ENCODE measurements at regions of chr2 and their contacts with region 1.

Region 1: DNA sequence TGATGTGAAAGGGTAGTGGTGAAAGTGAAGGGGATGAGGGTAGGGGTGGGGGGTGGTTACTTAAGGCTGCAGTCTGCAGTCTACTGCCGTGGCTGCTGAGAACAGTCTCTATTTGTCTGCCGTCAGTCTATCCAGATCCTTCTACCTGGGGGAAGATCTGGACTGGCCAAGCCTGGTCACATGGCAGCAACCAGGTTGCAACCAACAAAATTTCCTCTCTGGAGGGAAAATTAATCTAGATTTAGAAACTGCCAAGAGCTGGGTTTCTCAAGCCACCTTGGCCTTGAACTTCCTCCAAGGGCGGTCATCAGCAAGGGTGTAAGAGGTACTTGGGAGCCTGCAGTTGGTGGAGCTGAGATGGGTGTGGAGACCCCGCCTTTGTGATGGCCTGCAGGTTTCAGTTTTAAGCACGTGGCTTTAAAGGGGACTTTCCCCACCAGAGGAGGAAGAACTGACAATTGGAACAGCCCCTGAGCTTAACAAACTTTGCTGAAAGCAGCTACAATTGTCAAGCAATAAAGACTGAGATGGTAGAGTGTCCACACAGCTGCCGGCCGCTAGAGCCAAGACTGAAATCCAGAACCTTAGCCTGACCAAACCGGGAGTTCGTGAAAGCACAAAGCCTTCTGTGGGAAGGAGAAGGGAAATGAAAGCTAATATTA is 31.4 kb upstream of the KCMF1 start:
- DNase-seq: peak; percentile 70
- ATAC-seq: peak; percentile 93
- H3K4me3 Mint-ChIP-seq: peak overlapping the region; percentile 87
- H3K27ac Mint-ChIP-seq: peak overlapping the region; percentile 99
- H3K4me1 Mint-ChIP-seq: peaks cover 37% of the 10 kb centered on the region
- H3K27me3 Mint-ChIP-seq: no peaks in the 10 kb centered on the region

Region 2: GRCh38 chr2:84919885-84920580 is 19.5 kb before region 1 on chr2:
- POLR2A ChIA-PET with region 1: interaction called, 42 read pairs
- DNase-seq: no peak
- ATAC-seq: peak; percentile 57
- H3K4me3 Mint-ChIP-seq: peak overlapping the region; percentile 76
- H3K27ac Mint-ChIP-seq: peak overlapping the region; percentile 81
- H3K4me1 Mint-ChIP-seq: peaks cover 39% of the 10 kb centered on the region
- H3K27me3 Mint-ChIP-seq: no peaks in the 10 kb centered on the region

Region 3: DNA sequence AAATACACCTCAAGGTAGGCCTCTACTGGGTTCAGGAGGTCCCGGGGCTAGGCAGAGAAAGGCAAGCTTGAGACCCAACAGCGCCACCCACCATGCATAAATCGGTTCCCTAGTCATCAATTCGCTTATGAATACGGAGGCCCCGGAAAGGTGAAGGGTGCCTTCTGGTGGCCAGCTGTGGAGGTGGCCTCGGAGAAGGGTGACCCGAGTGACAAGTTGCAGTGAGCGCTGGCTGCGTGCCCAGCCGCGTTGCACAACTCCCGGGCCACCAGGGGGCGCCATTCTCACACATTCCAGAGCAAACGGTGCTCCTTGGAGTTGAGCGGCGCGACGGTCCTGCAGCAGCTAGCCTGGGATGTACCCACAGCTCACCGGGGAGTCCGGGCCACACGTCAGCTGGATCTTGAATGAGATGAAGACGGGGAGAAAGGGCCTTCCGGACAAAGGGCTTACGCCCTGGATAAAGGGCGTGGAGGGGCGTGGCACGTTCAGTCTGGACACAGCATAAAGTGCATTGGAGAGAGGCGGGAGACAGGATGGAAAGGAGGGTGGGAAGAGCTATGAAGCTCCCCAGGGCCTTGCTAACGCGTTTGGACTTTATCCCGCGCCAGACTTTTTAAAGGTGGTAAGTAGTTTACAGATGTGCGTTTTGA is 13.7 kb before region 1 on chr2:
- POLR2A ChIA-PET with region 1: interaction called, 42 read pairs
- DNase-seq: peak; percentile 99
- ATAC-seq: peak; percentile 88
- H3K4me3 Mint-ChIP-seq: peak overlapping the region; percentile 96
- H3K27ac Mint-ChIP-seq: peak overlapping the region; percentile 85
- H3K4me1 Mint-ChIP-seq: peaks cover 27% of the 10 kb centered on the region
- H3K27me3 Mint-ChIP-seq: no peaks in the 10 kb centered on the region

Region 4: GRCh38 chr2:84958135-84959044 is 18.8 kb after region 1 on chr2:
- POLR2A ChIA-PET with region 1: interaction called, 49 read pairs
- DNase-seq: peak; percentile 10
- ATAC-seq: no peak
- H3K4me3 Mint-ChIP-seq: no peak overlapping the region
- H3K27ac Mint-ChIP-seq: no peak overlapping the region
- H3K4me1 Mint-ChIP-seq: peaks cover 16% of the 10 kb centered on the region
- H3K27me3 Mint-ChIP-seq: no peaks in the 10 kb centered on the region